Cardiac septum (tissue), 1 donor: ENCODE measurements at regions of chr9 and their contacts with region 1.

Region 1: GRCh38 chr9:89878687-89879086 is 273.9 kb downstream of the GADD45G start:
- DNase-seq: peak; percentile 90

Region 2: GRCh38 chr9:89815903-89816573 is 62.6 kb before region 1 on chr9:
- intact Hi-C with region 1: loop called (anchors 5 kb)
- DNase-seq: no peak

Region 3: DNA sequence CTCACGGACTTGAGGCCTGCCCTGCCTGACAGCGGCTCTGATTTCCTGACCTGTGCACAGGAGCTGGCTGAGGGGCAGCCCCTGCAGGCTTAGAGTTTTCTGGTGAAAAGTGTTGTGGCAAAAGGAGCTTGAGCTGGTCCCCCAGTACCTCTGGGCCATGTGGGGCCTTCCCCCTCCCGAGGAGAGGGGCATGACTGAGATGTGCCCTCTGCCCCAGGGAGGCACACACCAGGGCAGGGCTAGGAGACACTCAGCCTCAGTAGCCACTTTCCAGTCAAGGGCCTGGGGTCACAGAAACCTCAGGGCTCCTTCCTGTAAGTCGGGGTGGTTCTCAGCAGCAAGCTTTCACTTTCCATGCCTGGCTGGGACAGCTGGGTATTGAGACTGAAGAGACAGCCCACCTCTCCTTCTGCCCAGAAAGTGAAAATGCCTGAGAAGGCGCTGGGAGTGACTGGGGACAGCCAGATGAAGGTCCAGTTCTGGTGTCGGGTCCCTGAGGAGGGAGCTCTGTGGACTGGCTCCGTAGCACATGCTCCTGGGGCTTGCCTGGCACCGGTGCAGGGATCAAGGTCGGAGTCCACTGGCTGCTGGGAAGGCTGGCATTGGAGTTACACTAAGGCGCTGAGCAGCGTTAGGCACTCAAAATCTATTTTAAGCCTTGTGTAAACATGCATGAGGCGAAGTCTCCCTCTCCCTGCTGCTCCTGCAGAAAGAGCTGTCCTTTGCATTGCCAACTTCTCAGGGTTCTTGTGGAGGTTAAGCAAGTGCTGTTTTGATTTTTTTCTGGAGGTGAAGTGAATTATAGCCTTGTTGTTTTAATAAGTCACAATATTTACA is 121.1 kb after region 1 on chr9:
- intact Hi-C with region 1: loop called (anchors 5 kb)
- DNase-seq: peak; percentile 89